OCI-LY7 (cell line): ENCODE measurements at regions of chr1 and their contacts with region 1.

Region 1: DNA sequence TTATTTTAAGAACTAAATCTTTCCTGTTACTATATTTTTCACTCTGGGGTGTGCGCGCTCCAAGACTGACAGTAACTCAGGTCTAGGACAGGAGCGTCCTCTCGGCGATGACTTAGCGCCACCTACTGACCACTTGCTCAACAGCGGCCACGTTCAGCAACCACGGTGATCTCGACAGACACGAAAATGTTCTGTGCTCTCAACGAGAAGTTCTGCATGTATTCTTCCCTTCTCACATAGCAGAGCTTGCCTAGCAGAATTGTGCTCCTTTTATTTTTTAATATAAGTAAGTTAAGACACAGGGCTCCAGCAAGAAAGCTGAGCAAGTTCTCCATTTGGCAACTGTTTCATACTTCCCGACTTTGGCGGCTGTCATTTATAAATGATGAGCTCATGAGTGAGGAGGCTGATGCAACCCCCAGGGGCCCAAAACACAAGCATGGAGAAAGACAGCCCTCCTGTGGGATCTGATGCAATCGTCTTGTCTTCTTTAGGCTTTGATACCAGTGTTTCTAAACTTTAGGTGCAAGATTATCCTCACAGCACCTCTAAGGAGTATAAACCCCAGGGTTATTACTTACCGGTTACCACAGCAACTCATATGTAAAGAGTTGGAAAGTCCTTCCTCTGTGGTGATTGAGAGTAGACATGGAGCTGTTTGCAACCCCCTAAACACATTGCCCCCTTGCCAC is 92.6 kb downstream of the HHIPL2 start:
- DNase-seq: peak; percentile 75
- H3K4me3 ChIP-seq: no peak overlapping the region
- H3K27ac ChIP-seq: no peak overlapping the region
- H3K4me1 ChIP-seq: no peaks in the 10 kb centered on the region
- CTCF ChIP-seq: peak; percentile 96

Region 2: GRCh38 chr1:220879076-220879508 is 1576.2 kb before region 1 on chr1 and contains the start of gene HLX:
- CTCF ChIA-PET with region 1: no interaction called
- POLR2A ChIA-PET with region 1: no interaction called
- intact Hi-C with region 1: loop called (anchors 10 kb)
- DNase-seq: no peak
- H3K4me3 ChIP-seq: no peak within 1 kb of the TSS
- H3K27ac ChIP-seq: no peak within 1 kb of the TSS
- H3K4me1 ChIP-seq: no peaks in the 10 kb centered on the region
- CTCF ChIP-seq: no peak
- total RNA-seq, gene HLX: not detected in 2 replicates

Region 3: DNA sequence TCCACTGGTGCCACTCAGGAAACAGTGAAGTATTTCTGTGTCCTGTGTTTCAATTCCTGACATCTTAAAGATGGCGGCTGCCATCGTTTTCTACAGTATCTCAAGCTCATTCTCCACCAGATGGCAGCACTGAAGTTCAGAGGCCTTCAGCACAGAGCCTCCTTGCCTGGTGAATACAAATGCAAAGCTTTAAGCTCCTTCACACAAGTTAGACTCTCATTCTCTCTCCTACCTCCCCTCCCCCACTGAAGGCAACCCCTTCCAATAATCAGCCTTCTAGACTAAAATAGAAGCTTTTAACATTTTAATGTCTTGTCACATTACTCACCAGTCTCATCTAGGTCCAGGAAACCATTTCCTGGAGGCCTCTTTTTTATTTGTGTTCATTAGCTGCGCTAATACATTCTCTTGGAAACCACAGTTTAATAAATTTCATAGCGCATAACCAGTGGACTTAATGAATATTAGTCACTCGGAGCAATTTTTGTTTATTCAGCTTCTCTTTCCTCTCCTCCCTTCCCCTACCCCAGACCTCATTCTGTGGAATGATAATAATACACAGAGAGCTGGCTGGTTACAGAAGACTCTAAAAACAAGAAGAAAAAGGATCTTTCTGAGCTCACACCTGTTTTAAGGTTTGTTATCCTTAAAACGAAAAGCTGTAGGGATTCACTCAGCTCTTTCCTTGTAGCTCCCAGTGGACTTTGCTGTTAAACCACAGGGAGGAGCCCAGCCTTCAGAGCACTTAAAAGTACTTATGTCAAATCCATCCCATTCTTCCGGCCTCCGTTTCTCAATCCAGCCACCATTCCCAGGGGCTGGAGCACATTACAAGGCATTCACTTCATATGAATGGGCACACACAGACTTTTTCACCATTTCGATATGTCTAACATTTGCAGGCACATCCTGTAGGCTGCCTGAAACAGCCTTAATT is 1191.2 kb before region 1 on chr1:
- CTCF ChIA-PET with region 1: no interaction called
- POLR2A ChIA-PET with region 1: no interaction called
- intact Hi-C with region 1: loop called (anchors 5 kb)
- DNase-seq: peak; percentile 66
- H3K4me3 ChIP-seq: no peak overlapping the region
- H3K27ac ChIP-seq: no peak overlapping the region
- H3K4me1 ChIP-seq: no peaks in the 10 kb centered on the region
- CTCF ChIP-seq: peak; percentile 77

Region 4: DNA sequence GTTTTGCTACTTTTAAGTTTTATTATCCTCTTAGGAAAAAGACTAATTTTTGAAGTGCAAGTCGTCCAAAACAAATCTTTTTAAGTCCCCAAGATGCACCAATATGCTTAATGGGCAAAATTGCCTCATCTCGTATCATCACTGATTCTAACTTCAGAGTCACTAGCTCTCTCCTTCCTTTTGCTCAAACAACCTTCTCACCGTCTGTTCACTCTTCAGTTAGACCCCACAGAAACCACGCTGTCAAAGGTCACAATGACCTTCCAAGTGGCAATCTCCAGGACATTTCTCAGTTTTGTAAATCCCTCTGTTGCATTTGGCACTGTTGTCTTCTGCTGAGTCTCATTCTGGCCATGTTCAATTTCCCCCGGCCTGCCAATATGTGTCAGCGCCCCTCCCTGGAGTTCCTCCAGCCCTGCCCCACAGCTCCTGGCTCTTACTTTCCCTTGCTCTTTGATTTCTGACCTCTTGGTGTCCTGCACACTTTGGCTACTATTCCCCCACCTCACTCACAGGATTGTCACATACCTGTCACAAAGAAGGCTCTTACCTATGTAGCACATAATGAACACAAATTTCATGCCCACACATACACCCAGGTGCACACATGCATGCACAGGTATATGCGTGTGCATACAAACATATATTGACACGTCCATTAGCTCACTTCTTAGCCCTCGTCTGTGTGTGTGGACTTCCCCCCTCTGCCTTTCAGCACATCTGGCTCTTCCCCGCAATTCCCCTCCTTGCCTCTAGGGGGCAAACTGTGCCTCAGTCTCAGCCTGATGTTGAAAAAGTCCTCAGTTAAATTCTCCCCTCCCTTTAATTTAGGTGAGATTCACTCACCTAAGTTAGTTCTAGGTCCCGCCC is 359.5 kb before region 1 on chr1:
- CTCF ChIA-PET with region 1: no interaction called
- POLR2A ChIA-PET with region 1: no interaction called
- intact Hi-C with region 1: loop called (anchors 2 kb)
- DNase-seq: peak; percentile 51
- H3K4me3 ChIP-seq: no peak overlapping the region
- H3K27ac ChIP-seq: no peak overlapping the region
- H3K4me1 ChIP-seq: no peaks in the 10 kb centered on the region
- CTCF ChIP-seq: peak; percentile 87

Region 5: DNA sequence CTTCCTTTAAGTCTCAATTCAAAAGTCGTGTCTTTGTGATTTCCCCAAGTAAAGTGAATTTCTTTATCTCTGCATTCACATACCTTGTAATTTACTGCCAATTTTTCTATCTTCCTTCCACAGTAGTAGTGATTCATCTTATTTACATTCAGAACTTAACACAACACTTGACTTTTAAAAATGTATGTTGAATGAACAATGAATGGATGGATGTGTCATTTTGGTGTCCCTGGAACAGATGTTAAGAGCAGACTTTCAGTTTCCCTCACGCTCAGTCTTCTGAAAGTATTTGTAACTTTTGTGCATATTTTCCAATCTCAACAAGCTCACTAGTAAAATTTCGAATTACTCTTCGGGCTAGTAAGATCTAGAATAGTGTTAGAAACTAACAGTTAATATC is 259.5 kb before region 1 on chr1:
- CTCF ChIA-PET with region 1: no interaction called
- POLR2A ChIA-PET with region 1: no interaction called
- intact Hi-C with region 1: no loop called
- DNase-seq: no peak
- H3K4me3 ChIP-seq: no peak overlapping the region
- H3K27ac ChIP-seq: no peak overlapping the region
- H3K4me1 ChIP-seq: no peaks in the 10 kb centered on the region
- CTCF ChIP-seq: no peak